ENCODE measurements at regions of chr17 and their contacts with region 1.

Region 1: DNA sequence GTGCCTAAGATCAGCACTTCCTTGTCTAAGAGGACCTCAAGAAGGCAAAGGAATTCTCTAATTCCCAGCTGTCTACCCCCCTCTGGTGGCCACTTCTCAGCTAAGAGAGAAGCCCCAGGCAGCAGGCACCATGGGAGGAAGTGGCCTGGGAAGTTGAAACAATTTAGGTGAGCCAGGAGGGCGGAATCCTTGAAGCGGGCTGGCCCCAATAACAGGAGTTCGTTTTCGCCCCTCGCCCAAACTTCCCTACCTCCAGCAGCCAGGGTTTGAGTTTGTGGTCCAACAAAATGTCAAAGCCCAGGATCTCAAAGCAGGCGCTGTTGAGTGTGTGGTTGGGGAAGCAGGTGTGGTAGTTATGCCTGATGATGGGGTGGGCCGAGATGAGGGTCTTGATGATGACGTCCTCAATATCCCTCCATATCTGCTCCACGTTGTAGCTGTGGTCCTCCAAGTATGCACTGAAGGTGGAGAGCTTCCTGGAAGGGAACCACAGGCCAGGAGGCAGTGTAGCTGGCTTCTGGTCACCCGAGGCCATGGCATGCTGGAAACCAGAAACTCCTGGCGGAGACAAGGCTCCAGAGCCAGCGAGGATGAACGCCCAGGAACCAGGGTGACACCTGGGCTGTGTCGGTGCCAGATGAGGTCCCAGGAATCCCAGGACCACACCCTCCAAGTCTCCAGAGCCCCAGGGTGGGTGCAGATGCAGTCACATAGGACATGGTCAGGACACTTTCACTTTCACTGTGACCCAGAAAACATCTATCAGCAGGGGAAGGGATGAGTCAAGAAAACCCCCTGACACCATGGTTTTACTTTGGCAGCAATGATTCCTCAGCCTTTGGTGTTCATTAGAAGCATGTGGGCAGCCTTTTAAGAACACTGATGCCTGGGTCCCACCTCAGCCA is 25.6 kb downstream of the TTLL6 start:
- DNase-seq: peak; percentile 68
- H3K27ac ChIP-seq: peak overlapping the region; percentile 11; the same call in 1 of the 2 replicates
- CTCF ChIP-seq: peak; percentile 68

Region 2: DNA sequence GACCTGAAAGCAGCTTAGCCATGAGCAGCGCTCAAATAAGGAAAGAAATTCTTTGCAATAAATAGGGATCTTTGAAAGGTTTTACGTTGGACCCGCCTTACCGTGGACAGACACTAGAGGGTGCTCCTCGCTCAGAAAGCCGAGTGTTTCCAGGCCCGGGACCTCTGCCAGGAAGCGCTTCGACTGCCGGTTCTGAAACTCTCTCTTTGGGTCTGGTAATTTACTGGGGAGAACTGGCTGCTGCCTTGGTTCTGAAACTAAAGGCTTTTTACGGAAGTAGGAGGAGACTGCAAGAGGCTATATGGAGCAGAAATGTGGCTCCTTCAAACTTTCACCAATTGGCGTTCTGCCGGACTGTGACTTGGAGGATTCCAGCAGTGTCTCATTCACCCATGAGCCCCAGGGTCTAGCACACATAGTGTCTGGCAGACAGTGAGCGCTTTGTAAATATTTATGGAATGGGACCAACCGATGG is 119.6 kb before region 1 on chr17:
- CTCF ChIA-PET with region 1: interaction called, 10 read pairs
- POLR2A ChIA-PET with region 1: no interaction called
- DNase-seq: peak; percentile 63
- H3K27ac ChIP-seq: no peak overlapping the region
- CTCF ChIP-seq: peak; percentile 93

Region 3: DNA sequence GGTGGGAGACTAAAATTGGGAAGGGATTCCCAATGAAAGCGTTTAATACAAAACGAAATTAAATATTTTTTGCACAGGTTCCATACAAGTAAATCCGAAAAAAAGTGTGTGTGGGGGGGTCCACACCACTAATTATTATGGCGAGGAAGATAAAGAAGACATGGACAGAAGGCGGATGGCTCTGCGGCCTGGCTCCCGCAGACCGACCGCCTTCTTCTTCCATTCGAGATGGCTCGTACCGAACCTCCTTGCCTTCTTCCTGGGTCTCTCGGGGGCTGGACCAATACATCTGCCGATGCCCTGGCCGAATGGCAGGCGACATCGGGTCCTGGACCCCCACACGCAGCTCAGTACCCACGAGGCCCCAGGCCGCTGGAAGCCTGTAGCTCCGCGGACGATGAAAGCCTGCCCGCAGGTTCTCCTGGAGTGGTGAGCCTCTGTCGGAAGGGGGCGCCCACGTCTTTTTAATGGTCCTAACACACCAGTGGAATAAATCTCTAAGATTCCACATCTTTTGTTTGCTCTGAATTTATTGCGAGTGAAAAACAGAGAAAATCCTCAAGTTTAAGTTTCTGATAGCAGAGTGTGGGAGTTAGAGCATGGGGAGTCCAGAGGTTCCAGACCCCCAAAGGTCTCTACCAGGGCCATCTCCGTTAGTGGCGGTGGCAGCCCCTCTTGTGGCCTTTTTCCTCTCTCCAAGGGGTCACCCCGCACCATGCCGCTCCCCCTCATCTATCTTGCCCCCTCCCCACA is 67.0 kb before region 1 on chr17:
- CTCF ChIA-PET with region 1: interaction called, 36 read pairs
- POLR2A ChIA-PET with region 1: no interaction called
- DNase-seq: peak; percentile 60
- H3K27ac ChIP-seq: no peak overlapping the region
- CTCF ChIP-seq: peak; percentile 87

Region 4: DNA sequence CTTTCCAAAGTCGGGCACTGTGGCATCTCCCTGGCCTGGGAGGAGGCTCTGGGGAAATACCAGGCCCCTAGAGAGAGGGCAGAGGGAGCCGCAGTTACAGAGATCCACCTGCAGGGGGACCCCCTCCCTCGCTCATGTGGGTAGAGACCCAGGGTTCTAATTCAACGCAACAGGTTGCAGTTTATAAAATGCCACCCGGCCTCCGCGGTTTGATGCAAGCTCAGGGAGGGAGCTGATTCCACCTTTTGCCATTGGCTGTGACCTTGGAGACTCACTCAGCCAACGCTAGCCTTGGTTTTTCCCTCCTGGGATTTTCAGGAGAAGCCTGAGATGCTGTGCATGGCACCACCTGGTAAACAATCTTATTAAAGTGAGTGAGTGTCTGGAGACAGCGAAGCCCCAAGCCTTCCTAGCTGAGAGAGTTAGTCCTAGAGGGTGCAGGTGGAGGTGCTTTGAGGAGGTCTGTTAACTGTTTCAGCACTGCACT is 13.6 kb after region 1 on chr17:
- CTCF ChIA-PET with region 1: no interaction called
- POLR2A ChIA-PET with region 1: no interaction called
- DNase-seq: peak; percentile 81
- H3K27ac ChIP-seq: no peak overlapping the region
- CTCF ChIP-seq: peak; percentile 96

Measured in RWPE1 (cell line).